Activated CD4-positive, alpha-beta T cell treated with anti-CD3 and anti-CD28 coated beads for 36 hours (primary cell): ENCODE measurements at regions of chr7 and their contacts with region 1.

Region 1: DNA sequence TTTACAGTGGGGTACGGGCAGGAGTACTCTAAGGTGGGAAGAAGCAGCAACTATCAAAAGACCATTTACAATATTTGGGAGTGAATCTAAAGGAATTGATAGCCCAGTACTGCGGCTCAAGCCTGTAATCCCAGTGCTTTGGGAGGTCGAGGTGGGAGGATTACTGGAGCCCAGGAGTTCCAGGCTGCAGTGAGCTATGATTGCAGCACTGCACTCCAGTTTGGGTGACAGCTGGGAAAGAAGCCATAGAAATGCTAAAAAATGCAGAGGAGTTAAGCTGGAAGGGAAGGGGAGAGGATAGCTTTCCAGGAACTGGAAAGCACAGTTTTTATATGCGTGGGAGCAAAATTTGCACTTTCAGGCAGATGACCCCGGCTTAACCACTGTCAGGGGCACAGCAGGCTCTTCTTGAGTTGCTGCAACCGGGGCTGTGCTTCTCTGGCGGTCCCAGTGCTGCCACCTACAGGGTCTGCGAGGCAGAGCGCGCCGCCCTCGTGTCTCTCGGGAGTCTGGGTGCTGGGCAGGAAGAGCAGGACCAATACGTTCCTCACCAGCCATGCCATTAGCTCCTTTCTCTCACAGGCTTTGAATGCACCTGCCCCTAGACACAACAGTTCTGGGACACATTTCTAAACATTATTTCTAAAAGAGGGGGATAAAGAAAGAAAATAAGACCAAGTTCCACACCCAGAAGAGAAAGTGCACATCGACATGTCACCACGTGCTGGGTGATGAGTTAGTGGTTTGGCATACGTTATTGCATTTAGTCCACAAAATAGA is 10.1 kb upstream of the BMPER start:
- DNase-seq: peak; percentile 87
- ATAC-seq: peak; percentile 98
- H3K4me3 Mint-ChIP-seq: no peak overlapping the region
- H3K27ac Mint-ChIP-seq: no peak overlapping the region
- H3K4me1 Mint-ChIP-seq: peaks cover 4% of the 10 kb centered on the region
- H3K27me3 Mint-ChIP-seq: peaks cover 37% of the 10 kb centered on the region

Region 2: GRCh38 chr7:33185786-33186185 is 709.4 kb before region 1 on chr7:
- CTCF ChIA-PET with region 1: no interaction called
- POLR2A ChIA-PET with region 1: no interaction called
- intact Hi-C with region 1: loop called in 1 of 2 experiments (anchors 1 kb)
- DNase-seq: peak; percentile 9
- ATAC-seq: no peak
- H3K4me3 Mint-ChIP-seq: no peak overlapping the region
- H3K27ac Mint-ChIP-seq: no peak overlapping the region
- H3K4me1 Mint-ChIP-seq: peaks cover 5% of the 10 kb centered on the region
- H3K27me3 Mint-ChIP-seq: no peaks in the 10 kb centered on the region

Region 3: GRCh38 chr7:33423646-33424020 is 471.6 kb before region 1 on chr7:
- CTCF ChIA-PET with region 1: no interaction called
- POLR2A ChIA-PET with region 1: no interaction called
- intact Hi-C with region 1: loop called in 1 of 2 experiments (anchors 1 kb)
- DNase-seq: peak; percentile 29
- ATAC-seq: no peak
- H3K4me3 Mint-ChIP-seq: no peak overlapping the region
- H3K27ac Mint-ChIP-seq: no peak overlapping the region
- H3K4me1 Mint-ChIP-seq: no peaks in the 10 kb centered on the region
- H3K27me3 Mint-ChIP-seq: no peaks in the 10 kb centered on the region

Region 4: GRCh38 chr7:33744293-33745075 is 150.7 kb before region 1 on chr7:
- CTCF ChIA-PET with region 1: no interaction called
- POLR2A ChIA-PET with region 1: no interaction called
- intact Hi-C with region 1: no loop called
- DNase-seq: no peak
- ATAC-seq: peak; percentile 39
- H3K4me3 Mint-ChIP-seq: no peak overlapping the region
- H3K27ac Mint-ChIP-seq: no peak overlapping the region
- H3K4me1 Mint-ChIP-seq: no peaks in the 10 kb centered on the region
- H3K27me3 Mint-ChIP-seq: no peaks in the 10 kb centered on the region

Region 5: DNA sequence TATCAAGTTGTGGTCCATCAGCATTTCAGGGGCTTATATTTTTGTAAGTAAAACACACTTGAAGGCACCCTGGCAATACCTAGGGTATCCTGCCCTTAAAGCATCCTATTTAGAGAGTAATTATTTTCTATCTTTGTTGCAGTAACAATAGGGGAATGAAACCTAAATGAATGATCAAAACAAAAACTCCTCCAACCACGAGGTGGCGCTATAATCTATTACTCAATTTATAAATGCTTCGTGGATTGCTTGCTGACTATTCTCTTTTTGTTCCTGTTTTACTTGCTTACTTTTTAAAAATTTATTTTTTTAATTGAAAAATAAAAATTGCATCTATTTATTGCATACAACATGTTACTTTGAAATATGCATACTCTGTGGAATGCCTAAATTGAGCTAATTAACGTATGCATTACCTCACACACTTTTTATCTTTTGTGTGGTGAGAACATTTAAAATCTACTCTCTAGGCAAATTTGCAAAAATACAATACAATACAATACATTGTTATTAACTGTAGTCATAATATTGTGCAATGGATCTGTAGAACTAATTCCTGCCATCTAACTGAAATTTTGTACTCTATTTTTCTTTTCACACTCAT is 137.6 kb before region 1 on chr7:
- CTCF ChIA-PET with region 1: no interaction called
- POLR2A ChIA-PET with region 1: no interaction called
- intact Hi-C with region 1: loop called (anchors 1 kb)
- DNase-seq: peak; percentile 43
- ATAC-seq: no peak
- H3K4me3 Mint-ChIP-seq: no peak overlapping the region
- H3K27ac Mint-ChIP-seq: no peak overlapping the region
- H3K4me1 Mint-ChIP-seq: no peaks in the 10 kb centered on the region
- H3K27me3 Mint-ChIP-seq: no peaks in the 10 kb centered on the region

Region 6: DNA sequence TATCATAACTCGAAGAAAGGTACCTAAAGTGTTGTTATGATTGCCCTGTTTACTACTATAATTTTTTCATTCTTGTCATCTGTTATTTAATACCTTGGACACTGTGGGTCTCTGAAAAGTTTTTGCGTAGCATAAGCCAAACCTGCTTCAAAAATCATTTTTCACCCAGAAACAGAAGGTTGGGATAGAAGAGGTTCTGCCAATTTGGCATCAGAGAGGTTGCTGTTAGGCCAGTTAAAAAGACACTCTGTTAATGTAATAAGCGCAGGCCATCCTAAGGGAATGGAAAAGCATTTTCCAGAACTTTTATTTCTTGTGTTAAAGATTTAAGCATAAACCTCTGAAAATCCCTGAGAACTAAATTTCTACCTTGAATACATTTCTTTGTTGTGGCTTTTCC is 222.4 kb after region 1 on chr7:
- CTCF ChIA-PET with region 1: no interaction called
- POLR2A ChIA-PET with region 1: no interaction called
- intact Hi-C with region 1: no loop called
- DNase-seq: no peak
- ATAC-seq: no peak
- H3K4me3 Mint-ChIP-seq: no peak overlapping the region
- H3K27ac Mint-ChIP-seq: no peak overlapping the region
- H3K4me1 Mint-ChIP-seq: no peaks in the 10 kb centered on the region
- H3K27me3 Mint-ChIP-seq: no peaks in the 10 kb centered on the region